Right ventricle myocardium inferior (tissue), 1 donor: ENCODE measurements at regions of chr12 and their contacts with region 1.

Region 1: DNA sequence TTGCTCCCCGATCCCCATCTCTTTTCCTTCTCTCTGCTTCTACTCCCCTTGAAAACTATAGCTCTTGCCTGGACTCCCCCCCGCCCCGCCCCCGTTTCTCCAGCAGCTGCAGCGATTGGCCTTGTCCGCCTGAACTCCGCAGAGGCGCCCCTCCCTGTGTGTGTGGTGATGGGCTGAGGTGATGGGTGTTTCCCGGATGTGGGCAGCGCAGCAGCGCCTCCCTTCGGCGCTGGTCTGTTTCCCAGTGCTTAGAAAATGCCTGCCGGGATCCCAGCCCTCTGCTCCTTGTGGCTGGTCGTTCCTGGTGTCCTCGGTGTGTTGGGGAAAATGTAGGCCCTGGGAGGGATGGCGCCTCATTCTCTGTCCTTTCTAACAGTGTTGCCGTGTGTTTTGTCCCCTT is 43.3 kb downstream of the GALNT8 start:
- DNase-seq: no peak
- ATAC-seq: no peak

Region 2: GRCh38 chr12:4648501-4649357 is 114.8 kb before region 1 on chr12 and contains the starts of genes AKAP3 and NDUFA9:
- intact Hi-C with region 1: loop called (anchors 5 kb)
- DNase-seq: peak; percentile 83
- ATAC-seq: peak; percentile 98
- total RNA-seq, gene AKAP3: 2.5 TPM
- total RNA-seq, gene NDUFA9: 343 TPM